ENCODE measurements at regions of chr16 and their contacts with region 1.

Region 1: GRCh38 chr16:56356276-56357240 is 68.8 kb downstream of the AMFR start:
- DNase-seq: peak; percentile 72
- ATAC-seq: peak; percentile 98
- H3K4me3 ChIP-seq: peak overlapping the region; percentile 29 to 55
- H3K27ac ChIP-seq: 0 out of 2 replicates have a peak overlapping the region, but pooled peaks have one; percentile 12
- H3K4me1 ChIP-seq: peaks cover 13 to 16% of the 10 kb centered on the region in 2 experiments; a peak in 3 of 4 replicates
- H3K27me3 ChIP-seq: no peaks in the 10 kb centered on the region
- CTCF ChIP-seq: peak; percentile 79 to 94 (median 92)
- POLR2A ChIP-seq: no peak
- RAD21 ChIP-seq: peak; percentile 84

Region 2: GRCh38 chr16:55944377-55944802 is 412.2 kb before region 1 on chr16:
- CTCF ChIA-PET with region 1: interaction called, 10 read pairs
- POLR2A ChIA-PET with region 1: no interaction called
- RAD21 ChIA-PET with region 1: no interaction called
- intact Hi-C with region 1: no loop called
- DNase-seq: peak; percentile 23
- ATAC-seq: peak; percentile 95
- H3K4me3 ChIP-seq: no peak overlapping the region
- H3K27ac ChIP-seq: no peak overlapping the region
- H3K4me1 ChIP-seq: no peaks in the 10 kb centered on the region
- H3K27me3 ChIP-seq: peaks cover 18% of the 10 kb centered on the region
- CTCF ChIP-seq: peak; percentile 57 to 95 (median 94)
- POLR2A ChIP-seq: no peak
- RAD21 ChIP-seq: peak; percentile 61

Region 3: GRCh38 chr16:56332464-56333079 is 24.0 kb before region 1 on chr16:
- CTCF ChIA-PET with region 1: interaction called, 33 read pairs
- POLR2A ChIA-PET with region 1: no interaction called
- RAD21 ChIA-PET with region 1: interaction called in 1 of 2 experiments, 5 read pairs
- intact Hi-C with region 1: loop called (anchors 1 kb)
- DNase-seq: peak; percentile 65
- ATAC-seq: peak; percentile 97
- H3K4me3 ChIP-seq: no peak overlapping the region
- H3K27ac ChIP-seq: no peak overlapping the region
- H3K4me1 ChIP-seq: peaks cover 3 to 11% of the 10 kb centered on the region in 2 experiments; a peak in 3 of 4 replicates
- H3K27me3 ChIP-seq: no peaks in the 10 kb centered on the region
- CTCF ChIP-seq: peak; percentile 51 to 89 (median 62)
- POLR2A ChIP-seq: no peak
- RAD21 ChIP-seq: peak; percentile 92

Region 4: DNA sequence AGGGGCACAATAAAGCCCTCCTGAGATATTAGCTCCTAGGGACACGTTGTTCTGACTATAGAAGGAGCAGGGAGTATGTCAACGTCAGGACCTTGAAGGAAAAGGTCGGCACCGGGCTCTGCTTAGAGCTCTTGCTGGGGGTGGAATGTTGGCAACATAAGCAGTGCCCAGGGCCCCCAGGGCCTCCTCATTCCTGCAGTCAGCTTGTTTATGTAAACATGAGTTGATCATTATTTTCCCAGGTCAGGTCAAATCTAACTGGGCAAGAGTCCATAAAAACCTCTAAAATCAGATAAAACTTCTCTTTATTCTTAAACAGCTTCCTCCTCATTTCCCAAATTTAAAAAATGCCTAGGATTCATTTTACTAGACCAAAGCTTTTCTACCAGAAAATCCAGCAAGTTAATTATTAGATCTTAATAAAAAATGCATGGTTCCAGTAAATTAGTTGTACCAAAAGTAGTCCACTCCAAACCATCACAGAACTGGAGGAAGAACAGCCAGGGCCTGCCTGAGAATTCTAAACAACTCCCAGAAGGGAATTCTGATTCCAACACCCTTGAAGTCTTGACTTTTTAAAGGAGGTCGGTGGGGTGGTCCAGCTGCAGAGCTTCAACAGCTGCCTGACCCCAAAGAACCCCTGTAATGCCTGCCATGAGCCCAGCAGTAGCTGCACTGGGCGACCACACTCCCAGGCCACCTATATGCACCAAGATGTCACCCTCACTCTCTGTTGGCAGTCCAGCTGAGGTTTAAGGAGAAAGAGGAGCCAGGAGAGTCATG is 14.5 kb after region 1 on chr16:
- CTCF ChIA-PET with region 1: interaction called, 12 read pairs
- POLR2A ChIA-PET with region 1: no interaction called
- RAD21 ChIA-PET with region 1: no interaction called
- intact Hi-C with region 1: no loop called
- DNase-seq: no peak
- ATAC-seq: no peak
- H3K4me3 ChIP-seq: no peak overlapping the region
- H3K27ac ChIP-seq: no peak overlapping the region
- H3K4me1 ChIP-seq: peaks cover 0 to 14% of the 10 kb centered on the region in 2 experiments; a peak in 1 of 4 replicates
- H3K27me3 ChIP-seq: no peaks in the 10 kb centered on the region
- CTCF ChIP-seq: no peak
- POLR2A ChIP-seq: no peak
- RAD21 ChIP-seq: no peak

Measured in HCT116 (cell line).